ENCODE measurements at regions of chr12 and their contacts with region 1.

Region 1: GRCh38 chr12:121793838-121794533 is 498 bp upstream of the RHOF start:
- DNase-seq: peak; percentile 90 to 92
- ATAC-seq: peak; percentile 60 to 79 (median 68)
- H3K4me3 ChIP-seq: peak overlapping the region; percentile 32 to 72 (median 58)
- H3K27ac ChIP-seq: peak overlapping the region in 9 of 10 donors; percentile 68 to 100 (median 100)
- H3K4me1 ChIP-seq: peaks cover 41 to 87% (median 76%) of the 10 kb centered on the region in 9 donors
- H3K27me3 ChIP-seq: no peaks in the 10 kb centered on the region
- CTCF ChIP-seq: peak; percentile 99 to 100 (median 100)

Region 2: GRCh38 chr12:121773011-121773777 is 20.8 kb before region 1 on chr12:
- intact Hi-C with region 1: loop called in 2 of 10 experiments (anchors 2 kb)
- DNase-seq: peak; percentile 64 to 70
- ATAC-seq: peak; percentile 56 to 78 (median 68)
- H3K4me3 ChIP-seq: peak overlapping the region in 1 of 10 donors; percentile 11
- H3K27ac ChIP-seq: peak overlapping the region in 9 of 10 donors; percentile 31 to 80 (median 72)
- H3K4me1 ChIP-seq: peaks cover 4 to 68% (median 29%) of the 10 kb centered on the region in 9 donors
- H3K27me3 ChIP-seq: no peaks in the 10 kb centered on the region
- CTCF ChIP-seq: peak; percentile 54 to 87 (median 79)

Region 3: DNA sequence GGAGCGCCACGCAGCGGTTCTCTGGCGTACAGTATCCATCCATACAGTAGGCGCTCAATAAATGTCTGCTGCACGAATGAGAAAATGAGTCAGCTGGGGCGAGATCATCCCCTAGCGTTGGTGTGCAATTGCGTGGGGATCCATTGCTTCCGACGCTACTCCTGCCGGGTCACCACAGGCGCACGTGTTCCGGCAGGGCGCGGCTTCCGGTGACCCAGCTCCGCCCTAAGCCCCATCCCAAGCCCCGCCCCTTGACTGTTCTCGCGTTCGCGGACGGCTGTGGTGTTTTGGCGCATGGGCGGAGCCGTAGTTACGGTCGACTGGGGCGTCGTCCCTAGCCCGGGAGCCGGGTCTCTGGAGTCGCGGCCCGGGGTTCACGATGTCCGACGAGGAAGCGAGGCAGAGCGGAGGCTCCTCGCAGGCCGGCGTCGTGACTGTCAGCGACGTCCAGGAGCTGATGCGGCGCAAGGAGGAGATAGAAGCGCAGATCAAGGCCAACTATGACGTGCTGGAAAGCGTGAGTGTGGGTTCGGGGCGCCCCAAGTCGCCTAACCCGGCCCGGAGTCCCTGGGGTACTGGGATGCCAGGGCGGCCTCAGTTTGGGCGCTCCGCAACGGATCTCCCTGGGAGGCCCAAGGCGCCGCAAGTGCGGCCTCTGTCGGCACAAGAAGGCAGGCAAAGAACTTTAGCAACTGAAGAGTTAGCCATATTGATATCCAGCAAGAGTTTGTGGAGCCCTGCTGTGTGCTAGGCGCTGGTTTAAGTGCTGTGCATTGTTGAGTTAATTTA is 94.7 kb after region 1 on chr12 and contains the start of gene PSMD9:
- intact Hi-C with region 1: loop called in 7 of 10 experiments (anchors 1 to 5 kb)
- DNase-seq: peak; percentile 98
- ATAC-seq: peak; percentile 99 to 100 (median 99)
- H3K4me3 ChIP-seq: peak within 1 kb of the TSS; percentile 62 to 99 (median 92)
- H3K27ac ChIP-seq: peak within 1 kb of the TSS; percentile 79 to 98 (median 96)
- H3K4me1 ChIP-seq: peaks cover 8 to 31% (median 24%) of the 10 kb centered on the region in 9 donors
- H3K27me3 ChIP-seq: no peaks in the 10 kb centered on the region
- CTCF ChIP-seq: peak; percentile 35 to 79 (median 66)
- total RNA-seq, gene PSMD9: 29.3 to 39.9 (median 34.4) TPM

Measured in heart right ventricle (tissue), 16 donors.